Activated B cell treated with CpG ODN at 0.5 μM for 24 hours (primary cell): ENCODE measurements at regions of chr18 and their contacts with region 1.

Region 1: DNA sequence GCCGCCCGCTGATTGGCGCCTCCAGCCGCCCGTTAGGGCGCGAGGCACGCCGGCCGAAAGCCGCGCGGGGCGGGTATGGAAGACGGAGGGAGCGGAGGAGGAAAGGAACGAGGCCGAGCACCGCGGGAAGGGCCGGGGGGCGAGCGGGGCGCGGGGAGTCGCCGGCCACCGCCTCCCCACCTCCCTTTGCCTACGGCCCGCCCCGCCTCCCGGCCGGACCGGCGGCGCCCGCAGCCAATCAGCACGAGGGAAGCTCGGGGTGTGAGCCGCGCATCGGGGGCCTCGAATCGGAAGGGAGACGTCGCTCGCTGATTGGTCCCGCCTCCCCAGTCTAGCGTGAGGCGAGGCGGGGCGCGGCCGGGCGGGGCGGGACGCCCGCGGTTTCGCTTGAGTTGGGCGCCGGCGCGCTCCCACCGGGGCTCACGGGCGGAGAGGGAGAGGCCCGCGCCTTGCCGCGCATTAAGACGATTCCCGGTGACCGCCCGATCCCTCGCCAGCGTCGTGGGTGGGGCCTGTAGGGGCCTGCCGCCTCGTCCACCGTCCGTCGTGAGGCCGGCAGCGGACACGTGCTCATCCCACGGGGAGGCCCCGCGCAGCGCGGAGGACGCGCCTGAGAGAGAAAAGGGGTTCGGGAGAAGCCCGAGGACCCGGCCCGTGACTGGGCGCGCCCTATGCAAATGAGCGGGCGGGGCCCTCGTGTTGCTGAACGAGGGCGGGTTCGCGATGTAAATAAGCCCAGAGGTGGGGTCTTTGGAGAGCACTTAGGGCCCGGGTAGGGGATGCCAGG is 665 bp upstream of the SMAD2 start:
- DNase-seq: peak; percentile 93
- ATAC-seq: peak; percentile 80
- H3K4me3 Mint-ChIP-seq: peak overlapping the region; percentile 84
- H3K27ac Mint-ChIP-seq: peak overlapping the region; percentile 87
- H3K4me1 Mint-ChIP-seq: peaks cover 36% of the 10 kb centered on the region
- H3K27me3 Mint-ChIP-seq: no peaks in the 10 kb centered on the region
- CTCF ChIP-seq: no peak

Region 2: DNA sequence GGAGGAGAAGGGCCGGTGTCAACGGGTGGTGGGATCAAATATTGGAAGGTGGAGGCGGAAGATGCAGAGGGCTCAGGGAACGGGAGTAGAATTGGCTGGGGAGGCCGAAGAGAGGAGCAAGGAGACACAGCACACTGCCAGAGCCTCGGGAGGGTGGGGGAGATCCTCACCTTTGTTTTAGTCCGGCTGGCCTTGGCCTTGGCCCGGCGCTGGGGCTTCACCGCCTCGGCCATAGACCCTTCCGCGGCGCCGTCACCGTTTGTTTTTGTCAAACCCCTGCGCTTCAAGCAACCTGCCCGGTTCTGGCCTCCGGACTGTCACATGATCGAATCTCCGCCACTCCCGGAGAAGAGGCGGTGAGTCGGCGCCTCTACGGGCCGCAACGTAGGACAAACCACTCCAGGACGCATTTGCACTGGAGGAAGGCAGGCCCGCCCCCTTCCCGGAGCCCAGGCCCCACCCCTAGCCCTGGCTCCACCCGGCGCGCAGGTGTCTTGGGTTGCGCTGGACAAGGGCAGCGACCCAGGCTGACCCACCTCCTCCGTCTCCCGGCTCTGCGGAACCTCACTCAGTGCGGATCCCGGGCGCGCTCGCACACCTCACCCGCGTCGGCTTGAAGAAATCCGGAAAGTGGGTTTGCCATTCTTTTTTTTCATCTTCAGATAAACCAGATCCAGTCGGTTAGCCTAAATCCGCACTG is 1964.0 kb before region 1 on chr18 and contains the start of gene EPG5:
- CTCF ChIA-PET with region 1: no interaction called
- POLR2A ChIA-PET with region 1: no interaction called
- intact Hi-C with region 1: loop called (anchors 5 kb)
- DNase-seq: peak; percentile 88
- ATAC-seq: peak; percentile 100
- H3K4me3 Mint-ChIP-seq: peak within 1 kb of the TSS; percentile 98
- H3K27ac Mint-ChIP-seq: peak within 1 kb of the TSS; percentile 87
- H3K4me1 Mint-ChIP-seq: peaks cover 42% of the 10 kb centered on the region
- H3K27me3 Mint-ChIP-seq: no peaks in the 10 kb centered on the region
- CTCF ChIP-seq: no peak
- total RNA-seq, gene EPG5: 34.2 and 38.3 TPM in 2 replicates

Region 3: GRCh38 chr18:47150029-47150823 is 780.9 kb before region 1 on chr18 and contains the start of gene HDHD2:
- CTCF ChIA-PET with region 1: no interaction called
- POLR2A ChIA-PET with region 1: interaction called, 3 read pairs
- intact Hi-C with region 1: loop called (anchors 2 kb)
- DNase-seq: peak; percentile 75
- ATAC-seq: peak; percentile 83
- H3K4me3 Mint-ChIP-seq: peak within 1 kb of the TSS; percentile 92
- H3K27ac Mint-ChIP-seq: peak within 1 kb of the TSS; percentile 84
- H3K4me1 Mint-ChIP-seq: peaks cover 30% of the 10 kb centered on the region
- H3K27me3 Mint-ChIP-seq: no peaks in the 10 kb centered on the region
- CTCF ChIP-seq: no peak
- total RNA-seq, gene HDHD2: 36.6 and 38.8 TPM in 2 replicates

Region 4: DNA sequence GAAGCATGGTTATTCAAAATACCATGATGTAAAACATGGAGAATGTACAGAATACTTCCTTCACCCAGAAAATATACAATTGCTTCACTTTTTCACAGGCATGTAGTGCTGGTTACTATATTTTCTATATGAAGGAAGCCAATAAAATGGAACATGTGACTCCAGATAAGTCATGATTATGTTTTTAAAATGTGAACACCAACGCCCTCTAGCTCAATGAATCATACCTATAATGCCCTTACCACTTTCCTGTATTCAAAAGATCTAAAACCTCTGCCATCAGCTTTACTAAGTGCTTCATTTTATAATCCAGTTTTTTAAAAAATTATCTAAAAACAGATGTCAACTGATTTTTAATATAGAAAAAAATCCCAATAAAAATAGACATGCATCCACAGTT is 60.5 kb before region 1 on chr18:
- CTCF ChIA-PET with region 1: no interaction called
- POLR2A ChIA-PET with region 1: no interaction called
- intact Hi-C with region 1: no loop called
- DNase-seq: no peak
- ATAC-seq: no peak
- H3K4me3 Mint-ChIP-seq: no peak overlapping the region
- H3K27ac Mint-ChIP-seq: no peak overlapping the region
- H3K4me1 Mint-ChIP-seq: no peaks in the 10 kb centered on the region
- H3K27me3 Mint-ChIP-seq: no peaks in the 10 kb centered on the region
- CTCF ChIP-seq: no peak

Region 5: DNA sequence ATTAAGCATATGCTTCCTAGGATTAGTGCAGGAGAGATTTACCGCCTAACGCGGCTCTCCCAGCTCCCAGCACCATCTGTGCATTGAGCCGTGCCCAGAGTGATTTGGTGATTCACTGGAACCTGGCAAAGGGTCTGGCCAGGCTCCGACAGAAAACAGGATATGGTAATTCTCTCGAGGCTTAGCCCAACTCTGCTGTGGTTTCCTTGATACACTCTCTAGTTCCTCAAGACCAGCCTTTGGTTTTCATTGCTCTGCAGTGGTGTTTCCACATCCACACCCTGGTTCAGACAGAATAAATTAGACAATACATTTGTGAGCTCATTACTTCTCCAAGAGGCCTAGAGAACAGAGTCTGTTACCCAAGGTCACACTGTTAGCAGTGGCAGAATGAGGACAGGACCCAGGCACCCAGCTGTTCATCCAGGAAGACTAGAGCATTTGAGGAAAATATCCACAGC is 22.4 kb after region 1 on chr18:
- CTCF ChIA-PET with region 1: no interaction called
- POLR2A ChIA-PET with region 1: no interaction called
- intact Hi-C with region 1: loop called (anchors 1 kb)
- DNase-seq: no peak
- ATAC-seq: peak; percentile 94
- H3K4me3 Mint-ChIP-seq: peak overlapping the region; percentile 75
- H3K27ac Mint-ChIP-seq: no peak overlapping the region
- H3K4me1 Mint-ChIP-seq: peaks cover 19% of the 10 kb centered on the region
- H3K27me3 Mint-ChIP-seq: peaks cover 15% of the 10 kb centered on the region
- CTCF ChIP-seq: no peak

Region 6: DNA sequence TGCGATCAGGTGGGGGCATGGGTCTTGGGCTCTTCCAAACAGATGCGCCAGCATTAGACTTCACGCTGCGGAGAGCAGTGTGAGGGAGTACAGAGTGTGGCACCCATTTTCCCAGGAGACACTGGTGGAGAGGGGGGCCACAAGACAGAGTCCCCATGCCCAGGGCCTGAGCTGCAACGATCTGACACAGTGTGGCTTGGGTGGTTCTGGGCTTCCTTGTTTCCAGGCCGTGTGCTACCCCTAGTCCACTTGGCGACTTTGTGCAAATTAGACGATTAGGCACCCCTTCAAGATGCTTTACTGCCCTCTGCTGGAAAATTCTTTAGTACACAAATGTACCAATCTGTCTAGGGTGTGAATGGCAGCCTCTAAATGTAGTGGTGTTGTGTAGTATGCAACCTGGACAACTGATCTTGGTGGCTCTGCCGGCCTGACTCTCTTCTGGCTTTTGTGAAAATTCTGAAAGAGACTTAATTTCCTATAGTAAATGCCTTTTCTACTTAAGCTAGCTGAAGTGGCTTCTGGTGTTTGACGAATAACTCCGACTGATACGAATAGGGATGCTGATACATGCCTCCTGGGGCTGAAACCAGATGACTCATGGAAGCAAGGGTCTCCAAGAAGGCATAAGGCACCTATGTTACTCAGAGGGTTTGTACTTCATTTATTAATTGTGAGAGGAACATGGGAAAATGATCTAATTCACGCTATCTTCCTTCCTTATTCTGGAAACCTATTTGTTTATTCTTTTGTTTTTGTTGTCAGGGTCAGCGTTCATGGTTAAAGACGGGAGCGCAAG is 91.6 kb after region 1 on chr18:
- CTCF ChIA-PET with region 1: no interaction called
- POLR2A ChIA-PET with region 1: no interaction called
- intact Hi-C with region 1: loop called (anchors 1 kb)
- DNase-seq: no peak
- ATAC-seq: peak; percentile 42
- H3K4me3 Mint-ChIP-seq: no peak overlapping the region
- H3K27ac Mint-ChIP-seq: no peak overlapping the region
- H3K4me1 Mint-ChIP-seq: no peaks in the 10 kb centered on the region
- H3K27me3 Mint-ChIP-seq: peaks cover 18% of the 10 kb centered on the region
- CTCF ChIP-seq: no peak

Region 7: DNA sequence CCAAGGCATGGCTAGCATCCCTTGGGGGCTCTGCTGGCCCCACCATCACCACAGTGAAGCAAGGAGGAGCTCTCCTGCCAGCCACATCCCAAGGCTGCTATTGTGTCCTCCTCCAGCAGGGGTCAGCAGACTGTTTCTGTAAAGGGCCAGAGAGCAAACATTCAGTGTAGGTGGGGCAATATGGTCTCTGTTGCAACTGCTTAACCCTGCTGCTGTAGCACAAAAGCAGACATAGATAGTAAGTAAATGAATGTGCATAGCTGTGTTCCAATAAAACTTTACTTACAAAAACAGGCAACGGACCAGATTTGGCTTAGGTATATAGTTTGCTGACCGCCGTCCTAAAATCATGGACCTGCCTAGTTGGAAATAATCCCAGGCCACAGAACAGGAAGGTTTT is 514.4 kb after region 1 on chr18:
- CTCF ChIA-PET with region 1: no interaction called
- POLR2A ChIA-PET with region 1: interaction called, 3 read pairs
- intact Hi-C with region 1: loop called (anchors 1 kb)
- DNase-seq: peak; percentile 41
- ATAC-seq: peak; percentile 82
- H3K4me3 Mint-ChIP-seq: no peak overlapping the region
- H3K27ac Mint-ChIP-seq: no peak overlapping the region
- H3K4me1 Mint-ChIP-seq: peaks cover 2% of the 10 kb centered on the region
- H3K27me3 Mint-ChIP-seq: peaks cover 14% of the 10 kb centered on the region
- CTCF ChIP-seq: no peak

Region 8: GRCh38 chr18:49486953-49487710 is 1556.0 kb after region 1 on chr18 and contains the start of gene C18orf32:
- CTCF ChIA-PET with region 1: no interaction called
- POLR2A ChIA-PET with region 1: no interaction called
- intact Hi-C with region 1: loop called (anchors 1 kb)
- DNase-seq: peak; percentile 94
- ATAC-seq: peak; percentile 92
- H3K4me3 Mint-ChIP-seq: peak within 1 kb of the TSS; percentile 94
- H3K27ac Mint-ChIP-seq: peak within 1 kb of the TSS; percentile 98
- H3K4me1 Mint-ChIP-seq: peaks cover 68% of the 10 kb centered on the region
- H3K27me3 Mint-ChIP-seq: no peaks in the 10 kb centered on the region
- CTCF ChIP-seq: no peak
- total RNA-seq, gene C18orf32: 31.6 and 32.9 TPM in 2 replicates